Right cardiac atrium (tissue), 5 donors: ENCODE measurements at regions of chr18 and their contacts with region 1.

Region 1: GRCh38 chr18:23740105-23740830 is 51.0 kb downstream of the LAMA3 start:
- DNase-seq: peak in 2 of 3 donors; percentile 30 to 43
- ATAC-seq: no peak
- H3K4me3 ChIP-seq: no peak overlapping the region
- H3K27ac ChIP-seq: no peak overlapping the region
- H3K4me1 ChIP-seq: no peaks in the 10 kb centered on the region
- H3K27me3 ChIP-seq: no peaks in the 10 kb centered on the region

Region 2: GRCh38 chr18:23547846-23548245 is 192.4 kb before region 1 on chr18:
- intact Hi-C with region 1: no loop called
- DNase-seq: no peak
- ATAC-seq: no peak
- H3K4me3 ChIP-seq: no peak overlapping the region
- H3K27ac ChIP-seq: no peak overlapping the region
- H3K4me1 ChIP-seq: no peaks in the 10 kb centered on the region
- H3K27me3 ChIP-seq: no peaks in the 10 kb centered on the region

Region 3: DNA sequence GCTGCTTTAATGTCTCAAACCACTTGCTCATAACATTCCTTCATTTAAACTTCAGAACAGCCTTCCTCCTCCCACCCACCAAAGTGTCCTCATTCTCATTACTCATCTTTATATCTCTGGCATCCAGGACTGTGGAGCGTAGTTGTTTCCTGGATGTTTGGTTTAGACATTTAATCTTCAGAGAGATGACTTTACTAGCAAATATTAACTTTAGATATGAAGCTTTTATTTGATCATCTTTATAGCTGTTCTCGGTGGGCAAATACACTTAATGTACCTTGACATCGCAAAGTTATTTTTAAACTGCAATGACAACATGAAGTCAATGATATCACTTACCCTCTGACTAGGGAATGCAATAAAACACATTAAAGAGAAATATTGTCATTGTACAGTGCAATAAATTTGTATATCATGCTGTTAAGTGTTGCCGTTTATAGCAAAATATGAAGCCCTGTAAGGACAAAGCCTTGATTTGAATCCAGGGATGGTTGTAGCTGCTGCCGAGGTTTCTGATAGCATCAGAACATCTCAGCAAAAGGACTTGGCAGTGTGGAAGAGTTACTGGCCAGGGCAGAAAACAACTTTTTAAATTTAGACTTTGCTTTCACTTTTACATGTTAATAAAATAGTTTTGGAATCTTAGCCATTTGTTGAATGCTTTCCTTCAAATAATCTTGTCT is 55.6 kb before region 1 on chr18:
- intact Hi-C with region 1: no loop called
- DNase-seq: no peak
- ATAC-seq: peak in 1 of 2 donors; percentile 34
- H3K4me3 ChIP-seq: no peak overlapping the region
- H3K27ac ChIP-seq: no peak overlapping the region
- H3K4me1 ChIP-seq: no peaks in the 10 kb centered on the region
- H3K27me3 ChIP-seq: no peaks in the 10 kb centered on the region

Region 4: DNA sequence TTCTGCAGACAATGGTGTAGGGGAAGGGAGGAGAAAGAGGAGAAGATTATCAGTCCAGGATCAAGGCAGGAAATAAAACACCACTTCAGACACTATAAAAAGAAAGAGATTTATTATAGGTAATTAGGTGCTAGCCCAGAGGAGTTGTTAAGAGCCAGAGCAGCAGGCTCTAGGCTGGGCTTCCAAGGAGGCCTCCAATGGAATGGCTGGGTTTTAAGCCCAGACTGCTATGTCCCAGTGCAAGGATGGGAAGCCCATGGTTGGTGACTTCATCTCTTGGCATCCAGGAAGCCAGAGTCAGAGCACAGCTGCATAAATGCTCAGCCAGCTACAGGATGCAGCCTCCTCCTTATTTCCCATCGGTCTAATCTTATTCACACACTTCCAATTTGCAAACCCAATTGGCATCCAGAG is 44.6 kb after region 1 on chr18:
- intact Hi-C with region 1: no loop called
- DNase-seq: no peak
- ATAC-seq: no peak
- H3K4me3 ChIP-seq: no peak overlapping the region
- H3K27ac ChIP-seq: no peak overlapping the region
- H3K4me1 ChIP-seq: no peaks in the 10 kb centered on the region
- H3K27me3 ChIP-seq: no peaks in the 10 kb centered on the region

Region 5: GRCh38 chr18:23805898-23806297 is 65.6 kb after region 1 on chr18:
- intact Hi-C with region 1: loop called in 1 of 4 experiments (anchors 10 kb)
- DNase-seq: no peak
- ATAC-seq: no peak
- H3K4me3 ChIP-seq: no peak overlapping the region
- H3K27ac ChIP-seq: no peak overlapping the region
- H3K4me1 ChIP-seq: no peaks in the 10 kb centered on the region
- H3K27me3 ChIP-seq: no peaks in the 10 kb centered on the region